Heart right ventricle (tissue), 16 donors: ENCODE measurements at regions of chr14 and their contacts with region 1.

Region 1: DNA sequence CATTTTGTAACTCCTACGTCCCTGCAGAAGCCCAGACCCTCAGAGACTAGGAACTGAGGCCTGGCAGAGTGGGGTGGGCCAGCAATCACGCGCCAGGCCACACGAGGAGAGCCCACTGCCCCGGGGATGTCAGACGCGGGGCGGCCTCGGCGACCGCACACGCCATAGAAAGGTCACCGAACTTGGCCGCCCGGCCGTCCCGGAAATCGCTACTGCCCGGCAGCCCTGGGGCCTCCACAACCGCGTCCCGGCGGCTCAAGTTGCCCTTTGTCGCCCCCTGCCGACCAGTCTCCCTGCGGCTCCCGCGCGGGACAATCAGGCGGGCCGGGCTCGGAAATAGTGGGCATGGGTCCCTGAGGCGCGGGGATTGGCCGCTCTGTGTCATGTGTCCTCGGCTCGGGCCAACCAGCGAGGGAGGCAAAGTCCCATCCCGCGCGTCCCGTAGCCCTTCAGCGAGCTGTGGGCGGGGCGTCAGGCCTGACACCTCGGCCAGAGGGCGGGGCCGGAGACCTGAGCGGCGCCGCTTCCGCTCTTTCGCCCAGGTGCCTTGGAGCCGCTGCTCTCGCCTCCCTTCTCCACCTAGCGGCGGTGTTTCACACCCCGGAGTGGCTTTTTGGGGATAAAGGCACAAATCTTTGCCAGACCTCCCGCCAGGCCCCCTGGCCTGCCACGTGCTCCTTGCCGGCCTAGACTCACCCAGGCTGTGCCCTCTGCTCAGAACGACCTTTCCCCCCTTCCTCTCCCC is 33.4 kb upstream of the DEGS2 start:
- DNase-seq: peak; percentile 99
- ATAC-seq: peak; percentile 99 to 100 (median 99)
- H3K4me3 ChIP-seq: peak overlapping the region; percentile 8 to 62 (median 56)
- H3K27ac ChIP-seq: peak overlapping the region; percentile 83 to 96 (median 92)
- H3K4me1 ChIP-seq: peaks cover 0 to 20% (median 13%) of the 10 kb centered on the region in 9 donors
- H3K27me3 ChIP-seq: no peaks in the 10 kb centered on the region
- CTCF ChIP-seq: peak; percentile 81 to 99 (median 96)

Region 2: GRCh38 chr14:99982537-99983250 is 210.2 kb before region 1 on chr14:
- intact Hi-C with region 1: loop called in 9 of 10 experiments (anchors 1 to 5 kb)
- DNase-seq: peak in 1 of 2 donors; percentile 50
- ATAC-seq: peak in 7 of 8 donors; percentile 76 to 92 (median 87)
- H3K4me3 ChIP-seq: no peak overlapping the region
- H3K27ac ChIP-seq: no peak overlapping the region
- H3K4me1 ChIP-seq: peaks cover 0 to 22% (median 10%) of the 10 kb centered on the region in 9 donors
- H3K27me3 ChIP-seq: no peaks in the 10 kb centered on the region
- CTCF ChIP-seq: peak; percentile 75 to 93 (median 89)

Region 3: DNA sequence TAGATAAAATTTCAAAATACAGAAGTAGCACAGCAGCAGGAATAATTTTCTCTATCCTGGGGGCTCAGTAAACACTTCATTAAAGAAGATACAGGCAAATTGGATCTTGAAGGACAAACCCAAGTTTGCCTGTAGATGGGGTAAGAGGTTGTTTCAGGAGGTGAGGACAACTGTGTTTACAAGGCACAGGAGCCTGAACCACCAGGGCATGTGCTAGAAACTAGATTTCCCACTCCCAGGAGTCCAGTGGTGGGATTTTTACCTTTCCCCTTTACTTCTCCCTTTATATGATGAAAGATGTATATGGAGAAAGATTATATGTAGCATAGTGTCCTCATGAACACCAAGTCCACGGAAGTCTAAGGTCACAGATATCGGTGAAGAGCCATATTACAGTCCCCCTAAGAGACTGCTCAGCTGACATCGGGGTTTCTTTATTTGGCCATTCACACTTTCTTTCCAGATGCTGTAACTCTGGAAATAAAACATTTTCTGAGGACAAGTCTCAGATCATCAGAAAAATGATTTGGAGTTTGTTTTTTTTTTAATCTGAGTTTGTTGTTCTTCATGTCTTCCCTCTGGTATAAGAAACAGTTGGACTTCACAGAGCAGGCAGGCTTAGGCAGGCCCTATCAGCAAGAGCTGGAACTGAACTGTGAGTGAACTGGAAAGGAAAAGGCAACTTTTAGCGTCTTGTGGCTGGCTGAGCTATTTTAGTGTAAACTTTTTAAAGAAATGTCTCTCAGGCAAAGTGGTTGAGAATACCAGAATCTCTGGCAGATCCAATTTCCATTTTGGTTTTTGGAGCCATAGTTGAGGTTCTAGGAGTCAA is 135.7 kb before region 1 on chr14:
- intact Hi-C with region 1: loop called in 1 of 10 experiments (anchors 2 kb)
- DNase-seq: no peak
- ATAC-seq: peak in 7 of 8 donors; percentile 33 to 78 (median 68)
- H3K4me3 ChIP-seq: no peak overlapping the region
- H3K27ac ChIP-seq: peak overlapping the region in 6 of 10 donors; percentile 12 to 54 (median 42)
- H3K4me1 ChIP-seq: peaks cover 0 to 40% (median 17%) of the 10 kb centered on the region in 9 donors
- H3K27me3 ChIP-seq: no peaks in the 10 kb centered on the region
- CTCF ChIP-seq: peak in 7 of 9 donors; percentile 14 to 51 (median 40)

Region 4: DNA sequence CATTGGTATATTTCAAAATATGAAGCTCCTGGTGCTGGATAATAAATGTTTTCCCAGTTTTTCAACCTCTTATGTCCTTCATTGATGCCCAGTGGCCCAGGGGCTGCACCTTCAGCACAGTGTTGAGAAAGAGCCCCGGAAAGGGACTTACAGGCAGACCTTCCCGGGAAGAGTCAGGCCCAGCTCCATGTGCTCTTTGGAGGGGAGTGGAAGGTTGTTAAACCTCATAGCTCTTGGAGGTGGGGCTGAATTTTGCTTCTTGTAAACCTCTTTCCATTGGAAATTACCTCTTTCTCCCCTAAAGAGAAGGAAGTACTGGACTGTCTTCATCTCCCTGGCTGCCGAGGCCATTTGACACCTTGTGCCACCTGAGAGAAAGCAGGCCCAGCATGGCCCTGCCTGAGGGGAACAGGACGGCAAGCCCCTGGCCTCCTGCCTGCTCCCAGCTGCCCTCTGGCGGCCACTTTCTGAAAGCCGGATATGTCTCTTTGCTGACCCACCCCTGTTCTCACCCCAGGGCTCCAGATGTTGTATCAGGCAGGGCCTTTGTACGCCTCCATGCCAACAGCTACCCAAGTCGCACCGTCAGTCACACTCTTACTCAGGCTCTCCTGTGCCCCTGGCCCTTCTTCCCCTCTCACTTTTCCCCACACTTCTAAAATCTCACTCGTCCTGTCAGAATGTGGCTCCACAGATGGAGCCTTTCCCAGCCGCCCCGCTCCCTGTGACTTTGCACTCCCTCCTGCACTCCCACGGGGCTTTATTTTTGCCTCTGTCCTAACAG is 84.6 kb before region 1 on chr14:
- intact Hi-C with region 1: loop called in 4 of 10 experiments (anchors 2 to 5 kb)
- DNase-seq: peak; percentile 88 to 89
- ATAC-seq: peak; percentile 83 to 90 (median 86)
- H3K4me3 ChIP-seq: no peak overlapping the region
- H3K27ac ChIP-seq: peak overlapping the region in 9 of 10 donors; percentile 11 to 84 (median 40)
- H3K4me1 ChIP-seq: peaks cover 26 to 69% (median 59%) of the 10 kb centered on the region in 9 donors
- H3K27me3 ChIP-seq: no peaks in the 10 kb centered on the region
- CTCF ChIP-seq: peak; percentile 87 to 97 (median 93)

Region 5: DNA sequence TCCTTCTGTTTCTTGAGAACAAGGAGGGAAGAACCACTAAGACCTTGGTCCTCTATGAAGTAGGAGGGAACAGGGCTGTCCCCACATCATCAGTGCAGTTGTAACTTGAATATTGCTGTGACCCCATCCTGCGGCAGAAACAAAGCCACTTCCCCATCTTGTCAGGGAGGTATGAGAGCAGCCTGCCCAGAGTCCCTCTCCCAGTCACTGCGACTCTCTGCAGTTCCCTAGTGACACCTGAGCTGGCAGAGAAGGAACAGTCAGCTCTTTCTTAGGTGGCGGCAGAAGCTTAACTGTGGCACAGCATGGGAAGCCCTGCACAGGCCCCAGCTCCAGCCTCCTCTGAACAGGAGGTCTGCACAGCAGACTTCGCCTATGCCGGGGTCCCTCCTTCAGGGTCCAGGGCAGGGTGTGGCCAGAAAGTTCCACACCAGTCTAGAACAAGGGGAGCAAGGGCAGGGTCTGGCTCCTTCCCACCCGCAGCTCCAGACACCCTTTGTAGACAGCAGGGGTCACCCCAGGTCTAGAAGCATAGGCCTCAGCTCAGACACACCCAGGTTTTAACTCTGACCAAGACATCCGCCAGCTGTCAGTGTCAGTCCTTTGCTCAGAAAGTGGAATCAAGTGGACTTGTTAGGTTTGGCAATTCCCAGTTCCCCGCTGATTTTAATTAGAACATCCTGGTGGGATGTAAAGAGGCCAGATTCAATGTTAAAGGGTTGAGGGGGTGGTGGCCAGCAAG is 70.2 kb before region 1 on chr14:
- intact Hi-C with region 1: loop called in 1 of 10 experiments (anchors 10 kb)
- DNase-seq: no peak
- ATAC-seq: peak in 2 of 8 donors; percentile 23 to 31
- H3K4me3 ChIP-seq: no peak overlapping the region
- H3K27ac ChIP-seq: no peak overlapping the region
- H3K4me1 ChIP-seq: peaks cover 0 to 8% (median 0%) of the 10 kb centered on the region in 9 donors
- H3K27me3 ChIP-seq: no peaks in the 10 kb centered on the region
- CTCF ChIP-seq: peak in 5 of 9 donors; percentile 7 to 33 (median 29)

Region 6: GRCh38 chr14:100239840-100240724 is 47.2 kb after region 1 on chr14:
- intact Hi-C with region 1: loop called in 1 of 10 experiments (anchors 2 kb)
- DNase-seq: peak; percentile 86 to 88
- ATAC-seq: peak; percentile 51 to 83 (median 74)
- H3K4me3 ChIP-seq: peak overlapping the region; percentile 91 to 100 (median 99)
- H3K27ac ChIP-seq: peak overlapping the region; percentile 91 to 100 (median 99)
- H3K4me1 ChIP-seq: peaks cover 15 to 69% (median 57%) of the 10 kb centered on the region in 9 donors
- H3K27me3 ChIP-seq: no peaks in the 10 kb centered on the region
- CTCF ChIP-seq: peak; percentile 56 to 85 (median 68)

Region 7: DNA sequence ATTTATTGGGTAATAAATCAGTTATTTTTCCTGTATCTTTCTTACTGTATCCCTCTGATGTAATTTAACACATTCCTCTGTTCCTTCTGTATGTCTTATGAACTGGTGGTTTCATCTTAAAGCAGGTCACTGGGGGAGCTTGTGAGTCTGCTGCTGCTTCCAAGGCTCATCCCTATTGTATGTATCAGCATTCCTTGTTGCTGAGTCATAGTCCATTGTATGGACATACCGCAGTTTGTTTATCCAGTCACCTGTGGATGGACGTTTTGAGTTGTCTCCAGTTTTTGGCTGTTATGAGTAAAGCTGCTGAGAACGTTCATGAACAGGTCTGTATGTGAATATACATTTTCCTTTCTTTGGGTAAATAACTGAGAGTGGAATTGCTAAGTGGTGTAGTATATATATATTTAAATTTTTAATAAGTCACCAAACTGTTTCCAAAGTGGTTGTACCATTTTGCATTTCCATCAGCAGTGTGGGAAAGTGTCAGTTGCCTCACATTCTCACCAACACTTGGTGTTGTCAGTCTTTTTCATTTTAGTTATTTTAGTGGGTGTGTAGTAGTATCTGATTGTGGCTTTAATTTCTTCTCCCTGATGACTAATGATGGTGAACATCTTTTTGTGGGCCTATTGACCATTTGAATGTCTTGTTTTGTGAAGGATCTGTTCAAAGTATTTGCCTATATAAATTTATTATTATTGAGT is 311.7 kb after region 1 on chr14:
- intact Hi-C with region 1: no loop called
- DNase-seq: no peak
- ATAC-seq: no peak
- H3K4me3 ChIP-seq: no peak overlapping the region
- H3K27ac ChIP-seq: no peak overlapping the region
- H3K4me1 ChIP-seq: no peaks in the 10 kb centered on the region
- H3K27me3 ChIP-seq: no peaks in the 10 kb centered on the region
- CTCF ChIP-seq: no peak